ENCODE measurements at regions of chr1 and their contacts with region 1.

Region 1: DNA sequence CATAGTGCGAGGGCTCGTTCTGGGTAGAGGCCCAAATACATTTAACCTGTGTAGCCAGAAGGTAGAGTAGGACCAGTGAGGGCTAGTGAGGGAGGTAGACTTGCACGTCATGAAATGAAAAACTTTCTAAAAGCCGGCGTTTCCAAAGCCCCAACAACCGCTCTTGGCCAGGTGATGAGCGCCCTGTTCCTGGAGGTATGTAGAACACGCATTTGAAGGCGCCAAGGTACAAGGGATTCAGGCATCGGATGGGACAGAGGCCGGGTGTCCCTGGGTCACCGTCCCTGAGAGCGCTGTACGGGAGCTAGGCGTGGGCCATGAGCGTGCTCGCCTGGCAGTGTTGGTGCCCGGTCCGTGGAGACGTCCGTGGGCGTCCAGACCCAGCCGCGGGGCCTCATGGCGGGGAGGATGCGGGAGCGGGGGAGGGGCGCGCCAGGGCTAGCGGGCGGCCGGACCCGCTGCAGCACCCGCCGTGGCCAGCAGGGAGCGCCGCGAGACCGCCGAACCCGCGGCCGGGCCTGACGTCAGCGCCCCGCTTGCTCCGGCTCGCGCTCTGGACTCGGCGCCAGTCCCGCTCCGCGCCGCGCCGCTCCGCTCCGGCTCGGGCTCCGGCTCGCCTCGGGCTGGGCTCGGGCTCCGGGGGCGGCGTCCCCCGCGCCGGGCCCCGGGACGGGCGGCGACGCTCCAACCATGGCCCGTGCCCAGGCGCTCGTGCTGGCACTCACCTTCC is at the start of gene PTPRU:
- DNase-seq: peak; percentile 76 to 92 (median 86)
- H3K4me3 ChIP-seq: peak within 1 kb of the TSS; percentile 58
- H3K27ac ChIP-seq: peak within 1 kb of the TSS; percentile 55 to 60
- H3K4me1 ChIP-seq: peaks cover 6% of the 10 kb centered on the region
- H3K27me3 ChIP-seq: no peaks in the 10 kb centered on the region
- CTCF ChIP-seq: peak; percentile 30 to 99 (median 98)
- EP300 ChIP-seq: no peak
- POLR2A ChIP-seq: peak; percentile 53
- total RNA-seq, gene PTPRU: 19.5 to 45.2 (median 35.2) TPM

Region 2: GRCh38 chr1:29011775-29012174 is 224.3 kb before region 1 on chr1:
- intact Hi-C with region 1: no loop called
- DNase-seq: no peak
- H3K4me3 ChIP-seq: no peak overlapping the region
- H3K27ac ChIP-seq: no peak overlapping the region
- H3K4me1 ChIP-seq: no peaks in the 10 kb centered on the region
- H3K27me3 ChIP-seq: no peaks in the 10 kb centered on the region
- CTCF ChIP-seq: no peak
- EP300 ChIP-seq: no peak
- POLR2A ChIP-seq: no peak

Region 3: GRCh38 chr1:30120245-30121000 is 884.3 kb after region 1 on chr1:
- intact Hi-C with region 1: loop called in 1 of 4 experiments (anchors 5 kb)
- DNase-seq: peak in 2 of 5 donors; percentile 18 to 54
- H3K4me3 ChIP-seq: no peak overlapping the region
- H3K27ac ChIP-seq: no peak overlapping the region
- H3K4me1 ChIP-seq: peaks cover 2% of the 10 kb centered on the region
- H3K27me3 ChIP-seq: no peaks in the 10 kb centered on the region
- CTCF ChIP-seq: no peak
- EP300 ChIP-seq: no peak
- POLR2A ChIP-seq: no peak

Region 4: GRCh38 chr1:30379684-30380624 is 1143.8 kb after region 1 on chr1:
- intact Hi-C with region 1: loop called in 3 of 4 experiments (anchors 2 to 10 kb)
- DNase-seq: peak; percentile 44 to 56 (median 55)
- H3K4me3 ChIP-seq: no peak overlapping the region
- H3K27ac ChIP-seq: peak overlapping the region in 1 of 2 donors; percentile 3
- H3K4me1 ChIP-seq: peaks cover 13% of the 10 kb centered on the region
- H3K27me3 ChIP-seq: no peaks in the 10 kb centered on the region
- CTCF ChIP-seq: peak; percentile 33 to 73 (median 71)
- EP300 ChIP-seq: no peak
- POLR2A ChIP-seq: no peak

Region 5: DNA sequence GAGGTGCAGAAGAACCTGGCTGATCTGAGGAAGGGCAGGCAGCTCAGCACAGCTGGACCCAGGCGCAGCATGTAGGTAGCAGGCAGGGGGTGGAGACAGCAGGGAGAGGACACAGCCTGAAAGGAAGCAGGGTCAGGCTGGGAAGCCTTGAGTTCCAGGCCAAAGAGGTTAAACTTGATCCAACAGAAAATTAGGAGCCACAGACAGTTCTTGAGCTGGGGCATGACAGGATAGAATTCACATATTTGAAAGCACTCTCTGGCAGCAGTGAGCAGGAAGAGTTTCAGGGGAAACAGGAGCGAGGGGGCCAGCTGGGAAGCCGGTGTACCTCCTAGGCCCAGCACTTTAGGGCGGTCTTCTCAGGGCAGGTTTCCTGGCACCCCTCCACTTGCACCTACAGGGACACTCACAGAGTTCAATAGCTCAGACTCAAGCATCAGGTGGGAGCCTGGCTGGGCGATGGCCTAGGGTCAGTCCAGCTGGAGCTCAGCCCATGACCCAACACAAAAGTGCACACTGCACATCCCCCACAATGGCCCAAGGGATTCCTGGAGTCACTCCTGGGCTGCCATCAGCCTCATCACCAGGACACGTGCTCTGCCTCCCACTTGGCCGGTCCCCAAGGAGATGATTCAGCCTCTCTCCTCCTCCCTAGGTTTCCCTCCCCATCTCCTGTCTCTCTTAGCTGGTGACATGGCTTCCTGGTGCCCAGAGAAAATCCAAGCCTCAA is 1464.6 kb after region 1 on chr1:
- intact Hi-C with region 1: loop called in 1 of 4 experiments (anchors 5 kb)
- DNase-seq: peak; percentile 27 to 77 (median 51)
- H3K4me3 ChIP-seq: no peak overlapping the region
- H3K27ac ChIP-seq: no peak overlapping the region
- H3K4me1 ChIP-seq: no peaks in the 10 kb centered on the region
- H3K27me3 ChIP-seq: no peaks in the 10 kb centered on the region
- CTCF ChIP-seq: no peak
- EP300 ChIP-seq: no peak
- POLR2A ChIP-seq: no peak

Region 6: GRCh38 chr1:30710407-30710806 is 1474.3 kb after region 1 on chr1:
- intact Hi-C with region 1: loop called in 1 of 4 experiments (anchors 2 kb)
- DNase-seq: no peak
- H3K4me3 ChIP-seq: no peak overlapping the region
- H3K27ac ChIP-seq: no peak overlapping the region
- H3K4me1 ChIP-seq: no peaks in the 10 kb centered on the region
- H3K27me3 ChIP-seq: no peaks in the 10 kb centered on the region
- CTCF ChIP-seq: no peak
- EP300 ChIP-seq: no peak
- POLR2A ChIP-seq: no peak